Dorsolateral prefrontal cortex (tissue), 120 donors: ENCODE measurements at regions of chr12 and their contacts with region 1.

Region 1: DNA sequence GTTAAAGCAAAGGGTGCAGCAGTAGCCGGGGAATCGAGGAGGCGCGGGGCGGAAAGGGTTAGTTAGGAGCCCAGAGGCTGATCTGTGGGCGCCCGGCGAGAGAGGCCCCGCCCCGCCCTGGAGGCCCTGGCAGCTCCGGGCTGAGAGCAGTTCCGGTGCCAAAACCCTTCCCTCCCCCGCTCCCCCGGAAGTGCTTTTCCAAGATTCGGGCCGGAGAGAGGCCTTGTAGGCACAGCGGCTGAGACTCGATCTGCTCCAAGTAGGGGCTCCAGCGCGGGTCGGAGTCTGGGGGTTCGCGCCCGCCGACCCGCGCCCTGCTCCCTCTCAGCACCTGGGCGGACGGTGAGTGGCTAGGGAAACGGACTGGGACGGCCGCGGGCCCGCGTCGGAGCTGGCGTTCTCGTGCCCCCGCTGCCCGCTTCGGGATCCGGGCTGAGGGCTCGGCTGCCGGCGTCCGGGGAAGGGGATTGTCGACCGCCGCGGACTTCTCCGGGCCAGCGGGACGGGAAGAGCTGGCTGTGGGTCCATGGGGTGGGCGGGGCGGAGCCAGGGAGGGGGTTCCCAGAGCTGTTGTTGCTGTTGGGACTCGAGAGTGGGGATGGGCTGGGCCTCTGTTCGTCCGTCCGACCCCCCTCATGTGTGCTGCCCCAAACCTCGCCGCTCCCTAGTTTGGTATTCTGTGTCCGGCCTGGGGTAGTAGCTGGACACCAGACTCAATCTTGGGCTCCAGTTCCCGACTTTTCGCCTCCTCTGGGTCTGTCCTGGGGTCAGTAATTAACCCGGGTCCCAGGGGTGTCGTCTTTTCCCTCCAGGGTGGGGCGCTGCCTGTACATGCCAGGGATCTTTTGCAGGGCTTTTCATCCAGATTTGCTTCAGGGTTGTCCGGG is at the start of gene FRS2:
- DNase-seq: peak; percentile 90 to 98 (median 94)
- H3K4me3 ChIP-seq: peak within 1 kb of the TSS; percentile 53 to 98 (median 88)
- H3K27ac ChIP-seq: peak within 1 kb of the TSS; percentile 11 to 98 (median 92)
- H3K27me3 ChIP-seq: no peaks in the 10 kb centered on the region
- CTCF ChIP-seq: peak in 44 of 56 donors; percentile 10 to 52 (median 29)
- total RNA-seq, gene FRS2: 41.5 to 87.4 (median 58.7) TPM

Region 2: GRCh38 chr12:69330475-69331473 is 139.7 kb before region 1 on chr12:
- intact Hi-C with region 1: no loop called
- DNase-seq: peak in 2 of 10 donors; percentile 12 to 14
- H3K4me3 ChIP-seq: peak overlapping the region; percentile 1 to 73 (median 54)
- H3K27ac ChIP-seq: peak overlapping the region in 1 of 59 donors; percentile 42
- H3K27me3 ChIP-seq: peaks cover 0 to 8% (median 0%) of the 10 kb centered on the region in 45 donors
- CTCF ChIP-seq: no peak

Region 3: GRCh38 chr12:69415471-69416275 is 54.8 kb before region 1 on chr12:
- intact Hi-C with region 1: loop called (anchors 5 to 10 kb)
- DNase-seq: peak in 7 of 10 donors; percentile 27 to 68 (median 45)
- H3K4me3 ChIP-seq: peak overlapping the region in 8 of 59 donors; percentile 5 to 48 (median 28)
- H3K27ac ChIP-seq: peak overlapping the region in 22 of 59 donors; percentile 4 to 63 (median 31)
- H3K27me3 ChIP-seq: no peaks in the 10 kb centered on the region
- CTCF ChIP-seq: peak; percentile 23 to 91 (median 77)

Region 4: DNA sequence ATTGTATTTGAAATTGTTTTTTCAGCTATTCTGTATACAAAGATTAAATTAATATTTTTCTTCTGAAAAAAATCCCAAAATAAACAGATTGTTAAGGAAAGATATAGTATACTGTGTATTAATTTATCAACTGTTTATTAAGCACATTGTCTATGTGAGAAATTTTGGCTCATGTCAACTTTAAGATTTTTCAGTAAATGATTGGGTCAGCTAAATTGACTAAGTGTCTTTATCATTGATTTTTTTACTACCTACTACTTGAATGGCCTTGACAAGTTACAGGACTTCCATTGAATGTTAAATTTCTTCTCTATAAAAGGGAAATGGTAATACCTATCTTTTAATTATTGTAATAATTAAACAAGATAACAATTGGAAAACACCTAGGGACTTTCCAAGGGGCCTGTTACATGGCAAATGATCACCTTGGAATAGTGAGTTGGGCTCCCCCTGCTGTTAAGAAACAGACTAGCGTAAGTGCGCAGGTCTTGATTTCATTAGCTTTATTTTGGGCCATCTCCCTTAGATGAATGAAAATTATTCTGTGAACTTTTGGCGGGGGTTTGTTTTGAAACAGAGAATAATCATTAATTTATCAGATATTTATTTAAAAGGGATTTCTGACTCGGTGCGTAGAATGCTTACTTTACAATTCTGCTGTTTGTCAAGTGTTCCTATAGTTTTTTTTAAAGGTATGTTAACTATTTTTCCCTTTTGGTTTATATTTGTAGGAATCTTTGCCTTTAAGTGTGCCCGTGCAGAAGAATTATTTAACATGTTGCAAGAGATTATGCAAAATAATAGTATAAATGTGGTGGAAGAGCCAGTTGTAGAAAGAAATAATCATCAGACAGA is 100.3 kb after region 1 on chr12:
- intact Hi-C with region 1: loop called in 1 of 2 experiments (anchors 5 kb)
- DNase-seq: peak in 4 of 10 donors; percentile 11 to 63 (median 54)
- H3K4me3 ChIP-seq: no peak overlapping the region
- H3K27ac ChIP-seq: no peak overlapping the region
- H3K27me3 ChIP-seq: no peaks in the 10 kb centered on the region
- CTCF ChIP-seq: peak; percentile 52 to 94 (median 79)

Region 5: GRCh38 chr12:69585189-69586062 is 115.0 kb after region 1 on chr12 and contains the start of gene CCT2:
- intact Hi-C with region 1: loop called (anchors 5 kb)
- DNase-seq: peak; percentile 97 to 99 (median 98)
- H3K4me3 ChIP-seq: peak within 1 kb of the TSS; percentile 63 to 100 (median 95)
- H3K27ac ChIP-seq: peak within 1 kb of the TSS in 56 of 59 donors; percentile 5 to 96 (median 83)
- H3K27me3 ChIP-seq: no peaks in the 10 kb centered on the region
- CTCF ChIP-seq: peak in 51 of 56 donors; percentile 6 to 66 (median 39)
- total RNA-seq, gene CCT2: 66.9 to 156 (median 104) TPM

Region 6: GRCh38 chr12:69616025-69616424 is 145.6 kb after region 1 on chr12:
- intact Hi-C with region 1: no loop called
- DNase-seq: no peak
- H3K4me3 ChIP-seq: no peak overlapping the region
- H3K27ac ChIP-seq: no peak overlapping the region
- H3K27me3 ChIP-seq: no peaks in the 10 kb centered on the region
- CTCF ChIP-seq: no peak

Region 7: DNA sequence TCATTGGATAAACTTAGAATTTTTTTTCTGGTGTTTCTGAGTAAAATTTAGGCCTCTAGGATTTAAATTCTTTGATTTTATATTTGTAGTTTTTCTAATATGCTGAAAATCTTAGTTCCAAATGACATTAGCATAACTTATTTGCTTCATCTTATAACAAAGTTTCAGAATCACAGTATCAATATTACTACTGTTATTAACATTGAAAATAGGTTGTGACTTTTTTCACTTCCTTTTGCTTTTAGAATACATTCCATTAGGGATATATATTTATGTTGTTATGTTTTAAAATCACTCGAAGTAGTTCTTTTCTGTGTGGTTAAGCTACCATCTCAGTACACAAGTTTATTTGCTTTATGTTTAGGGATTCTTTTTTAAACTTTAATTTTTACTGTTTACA is 281.0 kb after region 1 on chr12:
- intact Hi-C with region 1: no loop called
- DNase-seq: no peak
- H3K4me3 ChIP-seq: no peak overlapping the region
- H3K27ac ChIP-seq: no peak overlapping the region
- H3K27me3 ChIP-seq: no peaks in the 10 kb centered on the region
- CTCF ChIP-seq: no peak